ENCODE measurements at regions of chr4 and their contacts with region 1.

Region 1: GRCh38 chr4:67700738-67701516 is at the start of gene UBA6:
- DNase-seq: peak; percentile 99
- ATAC-seq: peak; percentile 94
- H3K4me3 ChIP-seq: peak within 1 kb of the TSS; percentile 86
- H3K27ac ChIP-seq: peak within 1 kb of the TSS; percentile 78
- H3K4me1 ChIP-seq: peaks cover 32% of the 10 kb centered on the region
- H3K27me3 ChIP-seq: no peaks in the 10 kb centered on the region
- CTCF ChIP-seq: peak; percentile 64
- total RNA-seq, gene UBA6: 94.6 and 107 TPM in 2 replicates

Region 2: DNA sequence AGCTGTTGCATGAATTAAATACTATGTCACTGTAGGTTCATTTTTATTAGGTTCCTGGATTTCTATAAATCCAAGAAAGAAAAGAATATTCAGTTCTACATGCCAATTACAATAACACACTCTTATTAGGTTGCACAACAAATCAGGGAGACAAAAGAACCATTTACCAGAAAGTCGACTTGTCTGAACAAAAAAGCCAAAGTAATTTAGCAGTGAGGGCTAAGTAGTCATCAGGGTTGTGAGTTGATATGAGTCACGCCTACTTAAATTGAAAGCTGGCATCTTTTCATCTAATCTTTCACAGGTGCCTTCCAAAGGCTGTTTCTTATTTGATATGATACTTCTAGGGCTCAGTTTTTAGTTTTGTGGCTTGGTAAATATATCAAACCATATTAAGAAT is 78.7 kb after region 1 on chr4:
- CTCF ChIA-PET with region 1: no interaction called
- POLR2A ChIA-PET with region 1: interaction called, 20 read pairs
- intact Hi-C with region 1: no loop called
- DNase-seq: peak; percentile 67
- ATAC-seq: peak; percentile 89
- H3K4me3 ChIP-seq: no peak overlapping the region
- H3K27ac ChIP-seq: no peak overlapping the region
- H3K4me1 ChIP-seq: no peaks in the 10 kb centered on the region
- H3K27me3 ChIP-seq: no peaks in the 10 kb centered on the region
- CTCF ChIP-seq: no peak

Region 3: DNA sequence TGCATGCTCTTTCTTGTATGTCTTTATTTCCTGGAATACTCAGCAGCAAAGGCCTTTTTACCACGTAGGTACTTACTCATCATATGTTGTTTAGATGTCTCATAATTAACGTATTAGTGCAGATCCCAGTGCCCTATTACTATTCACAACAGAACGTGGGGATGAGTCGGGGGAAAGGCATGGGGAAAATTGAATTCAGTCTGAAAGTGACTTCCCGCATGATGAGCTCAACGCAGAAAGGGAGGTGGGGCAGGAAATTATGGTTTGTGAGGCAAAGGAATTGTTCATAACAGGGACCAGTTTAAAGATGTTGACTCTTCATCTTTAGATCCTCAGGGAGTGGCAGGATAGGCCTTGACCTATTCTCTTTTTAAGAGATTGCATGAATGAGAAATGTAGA is 184.8 kb after region 1 on chr4:
- CTCF ChIA-PET with region 1: no interaction called
- POLR2A ChIA-PET with region 1: no interaction called
- intact Hi-C with region 1: loop called (anchors 1 kb)
- DNase-seq: peak; percentile 94
- ATAC-seq: peak; percentile 91
- H3K4me3 ChIP-seq: peak overlapping the region; percentile 45; the same call in 1 of the 2 replicates
- H3K27ac ChIP-seq: peak overlapping the region; percentile 95
- H3K4me1 ChIP-seq: peaks cover 24% of the 10 kb centered on the region
- H3K27me3 ChIP-seq: no peaks in the 10 kb centered on the region
- CTCF ChIP-seq: no peak